Heart right ventricle (tissue), 16 donors: ENCODE measurements at regions of chr2 and their contacts with region 1.

Region 1: GRCh38 chr2:202299712-202300111 is 34.1 kb downstream of the NOP58 start:
- DNase-seq: no peak
- ATAC-seq: no peak
- H3K4me3 ChIP-seq: no peak overlapping the region
- H3K27ac ChIP-seq: no peak overlapping the region
- H3K4me1 ChIP-seq: peaks cover 0 to 7% (median 0%) of the 10 kb centered on the region in 9 donors
- H3K27me3 ChIP-seq: no peaks in the 10 kb centered on the region
- CTCF ChIP-seq: no peak

Region 2: GRCh38 chr2:202135091-202135874 is 164.4 kb before region 1 on chr2:
- intact Hi-C with region 1: no loop called
- DNase-seq: peak; percentile 71 to 77
- ATAC-seq: peak; percentile 71 to 92 (median 84)
- H3K4me3 ChIP-seq: no peak overlapping the region
- H3K27ac ChIP-seq: no peak overlapping the region
- H3K4me1 ChIP-seq: peaks cover 0 to 12% (median 0%) of the 10 kb centered on the region in 9 donors
- H3K27me3 ChIP-seq: no peaks in the 10 kb centered on the region
- CTCF ChIP-seq: no peak

Region 3: DNA sequence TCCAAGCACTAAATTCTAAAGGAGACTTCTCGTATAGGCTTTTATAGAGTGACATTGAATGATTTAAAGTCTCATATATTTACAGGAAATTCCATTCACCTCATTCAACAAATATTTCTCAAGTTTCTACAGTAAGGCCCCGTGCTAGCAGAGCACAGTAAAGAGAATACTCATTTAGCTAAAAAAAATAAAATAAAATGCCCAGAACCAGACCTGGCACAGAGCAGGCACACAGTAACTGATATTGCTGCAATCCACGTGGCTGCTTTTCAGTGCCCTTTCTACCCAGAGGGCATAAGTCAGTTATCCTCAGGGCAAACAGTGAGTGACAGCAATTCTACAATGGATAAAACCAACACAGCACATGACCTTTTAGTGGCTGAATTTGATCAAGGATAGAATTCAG is 113.9 kb before region 1 on chr2:
- intact Hi-C with region 1: no loop called
- DNase-seq: no peak
- ATAC-seq: no peak
- H3K4me3 ChIP-seq: no peak overlapping the region
- H3K27ac ChIP-seq: no peak overlapping the region
- H3K4me1 ChIP-seq: no peaks in the 10 kb centered on the region
- H3K27me3 ChIP-seq: peaks cover 0 to 6% (median 0%) of the 10 kb centered on the region in 7 donors
- CTCF ChIP-seq: no peak

Region 4: DNA sequence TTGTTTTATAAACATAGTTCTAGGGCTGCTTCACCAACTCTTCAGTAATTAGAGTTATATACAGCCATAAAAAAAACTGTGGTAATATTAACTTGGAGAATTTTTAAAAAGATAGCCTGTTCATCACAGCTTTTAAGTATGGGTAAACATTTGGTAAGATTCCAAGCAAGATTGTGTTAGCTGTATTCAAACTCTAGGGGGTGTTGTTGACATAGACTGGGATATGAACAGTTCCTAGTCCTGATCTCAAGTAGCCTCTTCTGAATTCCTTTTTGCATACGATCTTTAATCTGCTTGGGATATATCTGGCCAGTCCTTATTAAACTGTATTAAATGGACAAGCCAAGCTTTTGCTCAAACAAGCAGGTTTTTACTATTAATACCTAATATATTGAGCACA is 20.8 kb before region 1 on chr2:
- intact Hi-C with region 1: loop called in 1 of 10 experiments (anchors 1 kb)
- DNase-seq: no peak
- ATAC-seq: peak in 7 of 8 donors; percentile 57 to 84 (median 74)
- H3K4me3 ChIP-seq: no peak overlapping the region
- H3K27ac ChIP-seq: peak overlapping the region in 2 of 10 donors; percentile 1 to 59
- H3K4me1 ChIP-seq: peaks cover 0 to 32% (median 21%) of the 10 kb centered on the region in 9 donors
- H3K27me3 ChIP-seq: no peaks in the 10 kb centered on the region
- CTCF ChIP-seq: peak; percentile 28 to 80 (median 65)

Region 5: DNA sequence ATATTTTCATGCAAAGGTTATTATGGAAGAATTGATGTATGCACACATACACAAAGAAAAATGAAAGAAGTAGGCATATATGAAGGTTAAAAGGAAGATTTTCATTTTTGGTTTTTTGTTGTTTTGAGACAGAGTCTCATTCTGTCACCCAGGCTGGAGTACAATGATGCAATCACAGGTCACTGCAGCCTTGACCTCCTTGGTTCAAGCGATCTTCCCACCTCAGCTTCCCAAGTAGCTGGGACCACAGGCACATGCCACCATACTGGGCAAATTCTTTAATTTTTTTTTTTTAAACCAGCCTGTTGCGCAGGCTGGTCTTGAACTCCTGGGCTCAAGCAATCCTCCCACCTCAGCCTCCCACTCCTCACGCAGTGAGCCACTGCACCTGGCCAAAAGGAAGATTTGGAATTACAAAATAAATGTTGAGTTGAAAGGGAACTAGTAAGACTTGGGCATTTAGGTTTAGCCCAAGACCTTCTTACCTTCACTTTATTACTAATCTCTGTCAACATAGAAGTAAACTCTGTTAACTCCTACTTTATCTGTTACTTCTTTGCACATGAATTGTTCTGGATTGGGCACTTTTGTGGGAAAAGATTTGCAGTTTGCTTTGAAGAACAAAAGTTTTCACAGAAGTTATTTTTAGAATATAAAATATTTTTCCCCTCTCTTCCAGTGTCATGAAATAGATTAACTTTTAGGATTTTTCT is 683.2 kb after region 1 on chr2:
- intact Hi-C with region 1: loop called in 1 of 10 experiments (anchors 10 kb)
- DNase-seq: no peak
- ATAC-seq: no peak
- H3K4me3 ChIP-seq: no peak overlapping the region
- H3K27ac ChIP-seq: no peak overlapping the region
- H3K4me1 ChIP-seq: no peaks in the 10 kb centered on the region
- H3K27me3 ChIP-seq: no peaks in the 10 kb centered on the region
- CTCF ChIP-seq: no peak